Activated CD8-positive, alpha-beta memory T cell treated with anti-CD3 and anti-CD28 coated beads, Interleukin-2, amount 10 ng/mL, durations not matched to agents 7 days and 5 days (primary cell): ENCODE measurements at regions of chr5 and their contacts with region 1.

Region 1: DNA sequence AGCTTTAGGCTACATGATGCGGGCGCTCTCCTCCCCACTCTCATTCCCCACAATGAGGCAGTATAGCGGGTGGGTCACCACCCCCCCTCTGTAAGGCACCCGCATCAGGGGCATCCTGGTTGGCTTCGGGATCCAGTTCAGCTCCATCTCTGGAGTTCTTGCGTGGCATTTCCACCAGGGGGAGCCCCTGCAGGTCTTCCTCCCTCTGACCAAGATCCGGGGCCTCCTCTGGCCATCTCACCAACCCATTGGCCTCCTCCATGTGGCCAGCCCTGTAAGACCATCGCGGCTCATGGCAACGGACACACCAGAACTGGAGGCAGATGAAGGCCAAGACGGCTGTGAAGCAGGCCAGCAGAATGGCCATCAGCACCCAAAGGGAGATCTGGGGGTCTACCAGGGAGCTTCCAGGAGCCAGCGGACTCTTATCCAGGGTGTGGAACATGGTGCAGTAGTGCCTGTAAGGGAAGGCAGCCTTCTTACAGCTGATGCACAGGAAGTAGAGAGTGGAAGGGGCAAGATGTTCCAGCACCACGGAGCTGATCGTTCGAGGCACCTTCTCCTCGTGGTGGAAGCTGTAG is 77.0 kb downstream of the CYFIP2 start:
- DNase-seq: peak; percentile 52
- ATAC-seq: peak; percentile 34
- H3K4me3 Mint-ChIP-seq: no peak overlapping the region
- H3K27ac Mint-ChIP-seq: no peak overlapping the region
- H3K4me1 Mint-ChIP-seq: peaks cover 52% of the 10 kb centered on the region
- H3K27me3 Mint-ChIP-seq: no peaks in the 10 kb centered on the region

Region 2: DNA sequence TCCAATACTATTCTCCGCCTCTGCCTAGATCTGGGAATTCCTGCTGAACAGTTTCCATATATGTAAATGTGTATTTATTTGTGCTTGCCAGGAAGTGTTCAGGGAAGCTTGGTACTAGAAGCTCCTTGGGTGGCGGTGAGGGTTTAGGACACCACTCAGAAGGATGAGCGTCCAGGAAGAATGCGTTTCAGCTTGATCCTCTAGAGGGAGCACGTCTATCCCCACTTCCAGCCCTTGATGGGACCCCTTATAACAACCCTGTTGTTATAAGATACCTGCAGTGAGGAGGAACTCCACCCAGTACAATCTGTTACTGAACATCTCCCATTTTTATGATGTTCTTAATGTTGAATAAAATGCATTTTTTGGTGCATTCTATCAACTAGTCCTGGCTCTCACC is 11.9 kb after region 1 on chr5:
- CTCF ChIA-PET with region 1: interaction called, 14 read pairs
- DNase-seq: no peak
- ATAC-seq: no peak
- H3K4me3 Mint-ChIP-seq: no peak overlapping the region
- H3K27ac Mint-ChIP-seq: no peak overlapping the region
- H3K4me1 Mint-ChIP-seq: peaks cover 34% of the 10 kb centered on the region
- H3K27me3 Mint-ChIP-seq: no peaks in the 10 kb centered on the region